HEK293T (cell line): ENCODE measurements at regions of chr9 and their contacts with region 1.

Region 1: GRCh38 chr9:128947422-128948301 is at the starts of genes DOLK and NUP188:
- DNase-seq: peak; percentile 99

Region 2: DNA sequence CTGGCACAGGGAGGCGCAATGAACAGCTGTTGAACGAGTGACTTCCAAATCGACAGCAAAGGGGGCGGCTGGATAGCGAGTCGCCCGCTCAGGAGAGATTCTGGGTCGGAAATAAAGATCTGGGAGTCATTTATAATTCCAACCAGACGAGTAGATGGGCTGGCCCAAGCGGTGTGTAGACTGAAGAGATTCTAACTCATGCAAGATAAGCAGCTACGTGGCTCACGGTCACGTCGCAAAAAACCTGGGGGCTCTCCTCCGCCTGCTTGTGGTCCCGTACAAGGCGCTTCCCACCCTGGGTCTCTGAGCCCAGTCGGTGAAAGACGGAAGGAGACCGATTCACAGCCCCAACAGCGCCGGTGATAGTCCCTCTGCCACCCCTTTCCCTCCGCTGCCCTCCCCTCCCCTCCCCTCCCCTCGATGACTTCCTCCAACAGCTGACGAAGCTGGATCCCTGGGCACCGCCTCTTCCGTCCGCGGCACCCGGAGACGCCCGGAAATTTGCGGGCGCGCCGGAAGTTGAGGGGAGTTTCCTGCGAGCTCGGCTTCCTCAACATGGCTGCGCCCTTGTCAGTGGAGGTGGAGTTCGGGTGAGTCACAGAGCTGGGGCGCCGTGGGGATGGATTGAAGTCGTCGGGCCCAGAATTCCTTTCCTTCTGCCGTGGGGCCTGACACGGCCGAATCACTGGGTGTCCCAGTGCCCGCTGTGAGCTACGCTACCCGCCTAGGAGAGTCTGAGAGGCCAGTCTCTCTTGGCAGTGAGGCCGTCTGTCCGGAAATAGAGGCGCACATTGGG is 576.6 kb before region 1 on chr9 and contains the start of gene URM1:
- CTCF ChIA-PET with region 1: no interaction called
- POLR2A ChIA-PET with region 1: no interaction called
- DNase-seq: peak; percentile 98

Region 3: DNA sequence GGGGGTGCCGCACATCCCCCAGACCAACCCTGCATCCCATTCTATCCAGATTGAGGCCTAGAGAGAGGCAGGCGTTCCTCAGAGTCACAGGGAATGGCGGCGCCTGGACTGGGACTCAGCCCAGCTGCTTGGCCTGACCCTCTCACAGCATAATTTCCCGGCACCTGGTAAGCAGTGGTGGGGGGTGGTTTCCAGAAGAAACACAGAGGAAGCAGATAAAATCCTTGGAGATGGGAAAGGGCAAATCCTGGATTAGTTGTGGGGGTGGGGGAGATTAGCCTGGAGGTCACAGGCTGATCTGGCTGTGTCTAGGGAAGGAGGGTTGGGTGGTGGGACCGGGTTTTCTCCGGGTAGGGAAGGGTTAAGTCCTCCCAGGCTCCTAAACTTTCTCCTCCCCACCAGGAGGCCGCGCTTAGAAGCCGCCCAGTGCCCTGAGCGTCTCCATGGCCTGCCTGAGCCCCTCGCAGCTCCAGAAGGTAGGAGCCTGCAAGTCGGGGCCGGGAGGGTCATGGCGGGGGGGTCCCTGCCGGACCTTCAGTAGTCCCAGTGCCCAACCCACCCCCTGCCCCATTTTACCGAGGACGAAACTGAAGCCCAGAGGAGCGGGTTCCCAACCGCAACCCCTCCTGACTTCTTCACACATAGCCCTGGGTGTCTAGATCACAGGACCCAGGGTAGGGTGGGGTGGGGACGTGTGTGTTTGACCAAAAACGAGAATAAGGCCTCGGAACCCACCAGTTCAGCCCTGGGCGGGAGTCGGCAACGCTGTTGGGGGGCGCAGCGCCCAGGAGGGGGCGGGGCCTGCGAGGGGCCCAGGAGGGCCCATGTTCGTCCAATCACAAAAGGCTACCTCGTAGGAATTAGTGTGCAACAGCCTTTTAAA is 25.5 kb before region 1 on chr9:
- CTCF ChIA-PET with region 1: no interaction called
- POLR2A ChIA-PET with region 1: interaction called, 10 read pairs
- DNase-seq: peak; percentile 80